CD8-positive, alpha-beta memory T cell (primary cell): ENCODE measurements at regions of chr1 and their contacts with region 1.

Region 1: DNA sequence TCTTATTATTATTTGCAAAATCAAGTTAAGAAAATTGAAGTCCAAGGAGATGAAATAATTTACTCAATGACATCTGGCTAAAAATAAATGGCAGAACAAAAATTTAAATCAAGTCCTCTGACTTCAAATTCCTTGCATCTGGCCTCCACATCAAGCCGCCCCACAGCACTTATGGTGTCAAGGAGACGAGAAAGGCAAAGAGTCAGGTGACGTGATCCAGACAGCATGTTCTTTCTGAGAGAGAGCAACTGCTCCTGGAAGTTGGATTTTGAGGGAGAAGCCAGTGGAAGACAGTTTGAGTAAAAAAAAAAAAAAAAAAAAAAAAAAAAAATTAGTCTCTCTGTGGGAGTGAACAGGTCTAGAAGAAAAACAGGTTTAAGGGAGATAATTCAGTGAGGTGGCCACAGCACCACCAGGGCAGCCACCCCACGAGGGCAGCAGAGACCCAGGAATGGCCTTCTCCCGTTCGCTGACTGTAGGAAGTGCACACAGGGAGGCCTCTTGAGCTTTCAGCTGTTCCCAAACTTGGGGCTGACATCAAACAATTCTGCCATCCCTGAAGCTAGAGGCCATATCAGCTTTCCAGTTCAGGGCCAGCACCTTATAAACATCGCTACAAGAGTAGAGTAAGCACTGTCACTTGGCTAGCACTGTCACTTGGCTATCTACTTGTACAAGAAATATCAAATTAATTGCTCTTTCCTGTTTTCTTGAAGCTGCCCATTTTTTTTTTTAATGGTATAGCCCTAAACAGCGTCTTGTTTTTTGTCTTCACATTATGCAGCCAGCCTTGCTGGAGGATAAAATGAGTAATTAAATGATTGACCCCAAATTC is 7.8 kb downstream of the C1orf162 start:
- DNase-seq: peak in 4 of 5 donors; percentile 17 to 61 (median 36)
- H3K4me3 ChIP-seq: no peak overlapping the region
- H3K4me3 Mint-ChIP-seq: no peak overlapping the region
- H3K27ac ChIP-seq: no peak overlapping the region
- H3K27ac Mint-ChIP-seq: no peak overlapping the region
- H3K4me1 ChIP-seq: peaks cover 26% of the 10 kb centered on the region
- H3K4me1 Mint-ChIP-seq: peaks cover 31 to 43% (median 36%) of the 10 kb centered on the region in 3 donors
- H3K27me3 ChIP-seq: no peaks in the 10 kb centered on the region
- H3K27me3 Mint-ChIP-seq: no peaks in the 10 kb centered on the region

Region 2: DNA sequence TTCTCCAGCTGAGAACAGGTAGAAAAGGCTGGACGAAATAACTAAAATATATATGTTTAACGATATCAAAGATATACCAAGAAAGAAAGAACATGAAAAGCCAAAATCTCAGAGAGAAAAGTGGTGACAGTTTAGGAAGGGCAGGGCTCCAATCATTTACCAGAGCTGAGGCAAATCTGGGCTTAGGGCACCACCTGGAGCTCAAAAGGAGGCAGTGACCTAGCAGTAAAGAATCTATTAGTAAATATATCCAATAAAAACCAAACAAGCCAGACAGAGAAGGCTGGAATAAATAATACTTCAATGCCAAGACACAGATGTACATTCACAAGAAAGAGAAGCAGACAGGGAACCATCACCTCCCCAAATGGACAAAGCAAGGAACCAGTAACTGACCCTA is 147.4 kb before region 1 on chr1:
- CTCF ChIA-PET with region 1: no interaction called
- POLR2A ChIA-PET with region 1: no interaction called
- DNase-seq: peak; percentile 6 to 73 (median 49)
- H3K4me3 ChIP-seq: no peak overlapping the region
- H3K4me3 Mint-ChIP-seq: peak overlapping the region in 1 of 7 donors; percentile 4
- H3K27ac ChIP-seq: no peak overlapping the region
- H3K27ac Mint-ChIP-seq: peak overlapping the region in 6 of 8 donors; percentile 2 to 80 (median 74)
- H3K4me1 ChIP-seq: peaks cover 4% of the 10 kb centered on the region
- H3K4me1 Mint-ChIP-seq: peaks cover 4 to 14% (median 5%) of the 10 kb centered on the region in 3 donors
- H3K27me3 ChIP-seq: no peaks in the 10 kb centered on the region
- H3K27me3 Mint-ChIP-seq: peaks cover 2 to 3% of the 10 kb centered on the region in 2 donors

Region 3: GRCh38 chr1:111406321-111406768 is 75.3 kb before region 1 on chr1:
- CTCF ChIA-PET with region 1: no interaction called
- POLR2A ChIA-PET with region 1: no interaction called
- DNase-seq: peak in 4 of 5 donors; percentile 10 to 62 (median 53)
- H3K4me3 ChIP-seq: peak overlapping the region; percentile 10
- H3K4me3 Mint-ChIP-seq: peak overlapping the region in 6 of 7 donors; percentile 11 to 55 (median 32)
- H3K27ac ChIP-seq: no peak overlapping the region
- H3K27ac Mint-ChIP-seq: peak overlapping the region in 5 of 8 donors; percentile 11 to 85 (median 47)
- H3K4me1 ChIP-seq: peaks cover 22% of the 10 kb centered on the region
- H3K4me1 Mint-ChIP-seq: peaks cover 24 to 48% (median 25%) of the 10 kb centered on the region in 3 donors
- H3K27me3 ChIP-seq: no peaks in the 10 kb centered on the region
- H3K27me3 Mint-ChIP-seq: peaks cover 0 to 6% of the 10 kb centered on the region in 2 donors

Region 4: GRCh38 chr1:111448918-111449702 is 32.5 kb before region 1 on chr1 and contains the starts of genes ATP5PB and WDR77:
- CTCF ChIA-PET with region 1: interaction called, 10 read pairs
- POLR2A ChIA-PET with region 1: interaction called, 4 read pairs
- DNase-seq: peak; percentile 83 to 96 (median 94)
- H3K4me3 ChIP-seq: peak within 1 kb of the TSS; percentile 98
- H3K4me3 Mint-ChIP-seq: peak within 1 kb of the TSS; percentile 98 to 100 (median 100)
- H3K27ac ChIP-seq: peak within 1 kb of the TSS; percentile 92
- H3K27ac Mint-ChIP-seq: peak within 1 kb of the TSS; percentile 89 to 100 (median 99)
- H3K4me1 ChIP-seq: peaks cover 59% of the 10 kb centered on the region
- H3K4me1 Mint-ChIP-seq: peaks cover 68 to 91% (median 81%) of the 10 kb centered on the region in 3 donors
- H3K27me3 ChIP-seq: no peaks in the 10 kb centered on the region
- H3K27me3 Mint-ChIP-seq: peaks cover 0 to 1% of the 10 kb centered on the region in 2 donors
- total RNA-seq, gene ATP5PB: 351 to 360 TPM
- total RNA-seq, gene WDR77: 73.2 to 74.7 TPM

Region 5: GRCh38 chr1:111463029-111463683 is 18.4 kb before region 1 on chr1:
- CTCF ChIA-PET with region 1: interaction called, 11 read pairs
- POLR2A ChIA-PET with region 1: no interaction called
- DNase-seq: no peak
- H3K4me3 ChIP-seq: no peak overlapping the region
- H3K4me3 Mint-ChIP-seq: no peak overlapping the region
- H3K27ac ChIP-seq: peak overlapping the region; percentile 21
- H3K27ac Mint-ChIP-seq: peak overlapping the region in 5 of 8 donors; percentile 12 to 74 (median 35)
- H3K4me1 ChIP-seq: no peaks in the 10 kb centered on the region
- H3K4me1 Mint-ChIP-seq: peaks cover 12 to 24% (median 23%) of the 10 kb centered on the region in 3 donors
- H3K27me3 ChIP-seq: no peaks in the 10 kb centered on the region
- H3K27me3 Mint-ChIP-seq: no peaks in the 10 kb centered on the region

Region 6: GRCh38 chr1:111471012-111471411 is 10.6 kb before region 1 on chr1:
- CTCF ChIA-PET with region 1: interaction called, 11 read pairs
- POLR2A ChIA-PET with region 1: no interaction called
- DNase-seq: peak; percentile 47 to 84 (median 82)
- H3K4me3 ChIP-seq: peak overlapping the region; percentile 55
- H3K4me3 Mint-ChIP-seq: no peak overlapping the region
- H3K27ac ChIP-seq: peak overlapping the region; percentile 40
- H3K27ac Mint-ChIP-seq: no peak overlapping the region
- H3K4me1 ChIP-seq: peaks cover 60% of the 10 kb centered on the region
- H3K4me1 Mint-ChIP-seq: peaks cover 22 to 35% (median 29%) of the 10 kb centered on the region in 3 donors
- H3K27me3 ChIP-seq: no peaks in the 10 kb centered on the region
- H3K27me3 Mint-ChIP-seq: no peaks in the 10 kb centered on the region